ENCODE measurements at regions of chr7 and their contacts with region 1.

Region 1: GRCh38 chr7:34091323-34091917 is 186.1 kb downstream of the BMPER start:
- DNase-seq: peak; percentile 69
- ATAC-seq: 0 out of 2 replicates have a peak, but pooled peaks have one; percentile 16
- H3K4me3 ChIP-seq: no peak overlapping the region
- H3K27ac ChIP-seq: no peak overlapping the region
- H3K4me1 ChIP-seq: peaks cover 3% of the 10 kb centered on the region
- H3K27me3 ChIP-seq: no peaks in the 10 kb centered on the region
- CTCF ChIP-seq: peak; percentile 76
- POLR2A ChIP-seq: no peak
- RAD21 ChIP-seq: peak; percentile 80

Region 2: DNA sequence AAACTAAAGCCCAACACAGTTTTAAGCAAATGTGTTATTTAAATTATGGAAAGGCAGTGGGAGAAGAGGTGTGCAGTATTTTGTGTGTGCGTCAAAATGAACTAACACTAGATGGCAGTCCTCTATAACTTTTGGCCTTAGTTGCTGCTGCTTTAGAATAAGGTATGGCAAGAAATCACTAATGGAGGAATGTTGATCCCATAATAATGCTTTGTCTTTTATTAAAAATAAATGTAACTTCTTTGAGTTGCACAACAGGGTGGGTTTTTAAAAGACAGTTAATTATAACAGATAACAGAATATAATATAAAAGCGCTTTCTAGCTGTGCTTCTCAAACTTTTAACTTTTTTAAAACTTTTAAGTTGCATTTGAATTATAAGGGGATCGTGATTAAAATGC is 905.6 kb before region 1 on chr7:
- CTCF ChIA-PET with region 1: no interaction called
- POLR2A ChIA-PET with region 1: no interaction called
- dilution Hi-C with region 1: no loop called
- in situ Hi-C with region 1: no loop called
- intact Hi-C with region 1: loop called (anchors 5 kb)
- DNase-seq: peak; percentile 68
- ATAC-seq: peak; percentile 97
- H3K4me3 ChIP-seq: no peak overlapping the region
- H3K27ac ChIP-seq: no peak overlapping the region
- H3K4me1 ChIP-seq: no peaks in the 10 kb centered on the region
- H3K27me3 ChIP-seq: no peaks in the 10 kb centered on the region
- CTCF ChIP-seq: peak; percentile 80
- POLR2A ChIP-seq: no peak
- RAD21 ChIP-seq: peak; percentile 85

Region 3: GRCh38 chr7:33986941-33987588 is 104.4 kb before region 1 on chr7:
- CTCF ChIA-PET with region 1: interaction called, 30 read pairs
- POLR2A ChIA-PET with region 1: interaction called, 7 read pairs
- dilution Hi-C with region 1: no loop called
- in situ Hi-C with region 1: no loop called
- intact Hi-C with region 1: loop called (anchors 1 kb)
- DNase-seq: peak; percentile 100
- ATAC-seq: peak; percentile 94
- H3K4me3 ChIP-seq: no peak overlapping the region
- H3K27ac ChIP-seq: peak overlapping the region; percentile 83
- H3K4me1 ChIP-seq: peaks cover 6% of the 10 kb centered on the region
- H3K27me3 ChIP-seq: no peaks in the 10 kb centered on the region
- CTCF ChIP-seq: no peak
- POLR2A ChIP-seq: no peak
- RAD21 ChIP-seq: peak; percentile 6; the same call in 1 of the 2 replicates

Region 4: GRCh38 chr7:34165929-34166550 is 74.6 kb after region 1 on chr7:
- CTCF ChIA-PET with region 1: interaction called, 3 read pairs
- POLR2A ChIA-PET with region 1: no interaction called
- dilution Hi-C with region 1: no loop called
- in situ Hi-C with region 1: no loop called
- intact Hi-C with region 1: loop called (anchors 2 kb)
- DNase-seq: peak; percentile 60
- ATAC-seq: peak; percentile 82
- H3K4me3 ChIP-seq: no peak overlapping the region
- H3K27ac ChIP-seq: no peak overlapping the region
- H3K4me1 ChIP-seq: peaks cover 2% of the 10 kb centered on the region; the same call in 1 of the 2 replicates
- H3K27me3 ChIP-seq: no peaks in the 10 kb centered on the region
- CTCF ChIP-seq: peak; percentile 76
- POLR2A ChIP-seq: no peak
- RAD21 ChIP-seq: peak; percentile 74

Region 5: DNA sequence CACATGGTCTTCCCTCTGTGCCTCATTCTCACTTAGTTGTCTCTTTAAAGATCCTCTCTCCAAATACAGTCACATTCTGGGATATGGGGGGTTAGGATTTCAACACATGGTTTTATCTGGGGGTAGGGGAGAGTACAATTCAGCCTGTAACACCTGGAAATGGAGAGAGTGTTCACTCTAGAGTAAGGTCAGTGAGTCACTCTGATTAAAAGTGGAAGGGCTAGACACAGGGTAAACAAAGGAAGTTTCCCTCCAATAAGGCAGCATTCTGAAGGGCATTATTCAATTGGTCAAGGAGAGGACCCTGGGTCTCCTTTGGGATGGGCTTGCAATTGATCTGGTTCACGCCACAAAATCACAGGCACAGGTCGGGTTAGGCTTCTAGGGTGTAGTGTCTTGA is 333.8 kb after region 1 on chr7:
- CTCF ChIA-PET with region 1: no interaction called
- POLR2A ChIA-PET with region 1: no interaction called
- dilution Hi-C with region 1: no loop called
- in situ Hi-C with region 1: no loop called
- intact Hi-C with region 1: no loop called
- DNase-seq: no peak
- ATAC-seq: no peak
- H3K4me3 ChIP-seq: no peak overlapping the region
- H3K27ac ChIP-seq: no peak overlapping the region
- H3K4me1 ChIP-seq: no peaks in the 10 kb centered on the region
- H3K27me3 ChIP-seq: no peaks in the 10 kb centered on the region
- CTCF ChIP-seq: no peak
- POLR2A ChIP-seq: no peak
- RAD21 ChIP-seq: no peak

Region 6: GRCh38 chr7:35037526-35038339 is 946.3 kb after region 1 on chr7:
- CTCF ChIA-PET with region 1: no interaction called
- POLR2A ChIA-PET with region 1: no interaction called
- dilution Hi-C with region 1: no loop called
- in situ Hi-C with region 1: no loop called
- intact Hi-C with region 1: loop called (anchors 10 kb)
- DNase-seq: peak; percentile 94
- ATAC-seq: peak; percentile 93
- H3K4me3 ChIP-seq: peak overlapping the region; percentile 87
- H3K27ac ChIP-seq: peak overlapping the region; percentile 72
- H3K4me1 ChIP-seq: peaks cover 2% of the 10 kb centered on the region; the same call in 1 of the 2 replicates
- H3K27me3 ChIP-seq: peaks cover 4% of the 10 kb centered on the region; the same call in 1 of the 2 replicates
- CTCF ChIP-seq: peak; percentile 85
- POLR2A ChIP-seq: 0 out of 2 replicates have a peak, but pooled peaks have one; percentile 36
- RAD21 ChIP-seq: peak; percentile 61

Measured in IMR-90 (cell line).